ENCODE measurements at regions of chr20 and their contacts with region 1.

Region 1: DNA sequence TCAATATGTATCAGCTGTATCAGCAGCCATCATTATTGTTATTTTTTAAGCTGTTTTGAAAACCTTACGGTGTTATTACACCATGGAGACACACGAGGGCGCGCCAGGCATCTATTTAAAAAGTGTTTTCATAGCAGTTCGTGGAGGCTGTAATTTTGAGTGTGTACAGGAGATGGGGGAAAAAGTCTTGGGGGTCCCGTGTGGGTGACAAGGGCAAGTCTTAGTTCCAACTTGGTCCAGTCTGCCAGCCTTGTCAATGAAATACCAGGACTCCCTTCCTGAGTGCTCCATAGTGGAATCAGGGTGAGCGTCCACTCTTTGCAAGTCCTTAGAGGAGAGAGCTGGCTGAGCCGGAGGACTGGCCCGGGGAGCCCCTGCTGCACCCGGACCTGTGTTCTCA is 43.3 kb downstream of the SLC2A10 start:
- DNase-seq: peak in 1 of 2 experiments; percentile 65
- H3K4me3 ChIP-seq: no peak overlapping the region
- H3K27ac ChIP-seq: no peak overlapping the region
- H3K4me1 ChIP-seq: peaks cover under 1% of the 10 kb centered on the region
- H3K27me3 ChIP-seq: no peaks in the 10 kb centered on the region
- CTCF ChIP-seq: peak; percentile 95

Region 2: GRCh38 chr20:47191074-47191673 is 438.4 kb after region 1 on chr20:
- CTCF ChIA-PET with region 1: interaction called, 10 read pairs
- POLR2A ChIA-PET with region 1: no interaction called
- intact Hi-C with region 1: loop called (anchors 10 kb)
- DNase-seq: peak in 1 of 2 experiments; percentile 79
- H3K4me3 ChIP-seq: no peak overlapping the region
- H3K27ac ChIP-seq: no peak overlapping the region
- H3K4me1 ChIP-seq: peaks cover 4% of the 10 kb centered on the region; the same call in 1 of the 2 replicates
- H3K27me3 ChIP-seq: peaks cover 3% of the 10 kb centered on the region; the same call in 1 of the 2 replicates
- CTCF ChIP-seq: no peak

Measured in PC-9 (cell line).